ENCODE measurements at regions of chr12 and their contacts with region 1.

Region 1: DNA sequence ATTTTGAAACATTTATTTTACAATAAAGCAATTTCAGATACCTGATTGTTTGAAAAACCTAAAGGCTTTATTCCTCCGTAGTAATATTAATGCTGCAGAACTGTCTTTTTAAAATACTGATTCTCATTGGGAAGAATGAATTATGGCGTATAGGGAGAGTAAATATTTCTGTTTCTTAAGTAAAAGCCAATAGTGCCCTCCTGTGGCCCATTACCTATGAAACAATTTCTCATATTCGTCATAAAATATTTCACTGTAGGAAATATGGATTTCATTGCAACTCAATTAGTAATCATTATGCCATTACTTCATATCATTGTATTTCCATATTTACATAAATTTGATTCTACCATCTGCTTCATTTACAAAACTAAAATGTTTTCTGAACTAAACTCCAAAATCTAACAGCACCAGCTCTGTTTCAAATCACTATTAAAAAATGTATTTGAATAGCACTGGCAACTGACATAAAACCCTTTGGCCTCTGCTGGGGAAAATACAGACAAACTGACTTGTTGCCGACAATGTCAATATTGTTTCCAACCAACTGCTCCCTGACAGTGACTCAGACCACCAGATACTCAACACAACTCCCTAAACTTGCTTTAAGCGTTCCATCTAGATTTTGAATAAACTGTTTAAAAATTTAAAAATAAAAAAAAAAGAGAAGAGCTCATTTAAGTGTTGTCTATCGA is 290.3 kb downstream of the NAV3 start:
- DNase-seq: no peak
- H3K4me3 ChIP-seq: no peak overlapping the region
- H3K27ac ChIP-seq: no peak overlapping the region
- H3K4me1 ChIP-seq: no peaks in the 10 kb centered on the region
- H3K27me3 ChIP-seq: no peaks in the 10 kb centered on the region
- CTCF ChIP-seq: peak in 1 of 3 experiments; percentile 3; a peak in 2 of 4 replicates
- EP300 ChIP-seq: no peak
- POLR2A ChIP-seq: no peak
- RAD21 ChIP-seq: peak in 1 of 2 experiments; percentile 40; a peak in 3 of 4 replicates

Region 2: DNA sequence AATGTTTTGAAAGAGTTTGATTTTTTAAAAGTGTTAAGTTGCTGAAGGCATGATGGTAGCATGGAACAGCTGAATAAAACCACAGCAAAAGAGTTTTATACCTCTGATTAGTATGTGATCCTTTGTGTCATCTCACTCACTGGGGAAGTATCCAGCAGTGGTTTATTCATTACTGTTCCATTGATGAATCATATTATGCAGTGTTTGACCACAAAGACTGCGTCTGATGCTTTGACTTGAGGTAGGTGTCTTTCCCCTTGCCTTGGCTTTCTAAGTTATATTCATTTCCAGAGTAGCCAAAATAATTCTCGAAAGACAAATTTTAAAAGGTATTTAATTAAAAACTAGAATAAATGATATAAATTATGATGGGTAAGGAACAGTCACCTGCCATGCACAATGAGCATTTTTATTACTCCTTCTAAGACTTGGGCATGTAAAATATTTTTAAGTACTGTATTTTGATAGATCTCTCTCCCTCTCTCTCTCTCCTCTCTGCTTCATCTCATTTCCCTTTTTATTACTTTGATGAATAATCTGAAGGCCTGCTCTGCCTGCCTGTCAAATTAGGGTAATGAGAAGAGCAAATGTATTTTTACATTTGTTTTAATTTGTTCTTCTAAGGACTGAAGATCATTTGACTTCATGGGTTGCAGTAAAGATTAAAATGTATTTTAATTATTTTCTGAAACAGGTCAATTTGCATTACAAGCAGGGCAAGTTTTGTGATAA is 125.4 kb before region 1 on chr12:
- CTCF ChIA-PET with region 1: interaction called, 17 read pairs
- POLR2A ChIA-PET with region 1: no interaction called
- DNase-seq: no peak
- H3K4me3 ChIP-seq: no peak overlapping the region
- H3K27ac ChIP-seq: no peak overlapping the region
- H3K4me1 ChIP-seq: no peaks in the 10 kb centered on the region
- H3K27me3 ChIP-seq: no peaks in the 10 kb centered on the region
- CTCF ChIP-seq: no peak
- EP300 ChIP-seq: no peak
- POLR2A ChIP-seq: no peak
- RAD21 ChIP-seq: no peak

Region 3: GRCh38 chr12:78004249-78005093 is 116.5 kb before region 1 on chr12:
- CTCF ChIA-PET with region 1: interaction called, 11 read pairs
- POLR2A ChIA-PET with region 1: no interaction called
- DNase-seq: no peak
- H3K4me3 ChIP-seq: no peak overlapping the region
- H3K27ac ChIP-seq: no peak overlapping the region
- H3K4me1 ChIP-seq: no peaks in the 10 kb centered on the region
- H3K27me3 ChIP-seq: no peaks in the 10 kb centered on the region
- CTCF ChIP-seq: no peak
- EP300 ChIP-seq: no peak
- POLR2A ChIP-seq: no peak
- RAD21 ChIP-seq: no peak

Region 4: DNA sequence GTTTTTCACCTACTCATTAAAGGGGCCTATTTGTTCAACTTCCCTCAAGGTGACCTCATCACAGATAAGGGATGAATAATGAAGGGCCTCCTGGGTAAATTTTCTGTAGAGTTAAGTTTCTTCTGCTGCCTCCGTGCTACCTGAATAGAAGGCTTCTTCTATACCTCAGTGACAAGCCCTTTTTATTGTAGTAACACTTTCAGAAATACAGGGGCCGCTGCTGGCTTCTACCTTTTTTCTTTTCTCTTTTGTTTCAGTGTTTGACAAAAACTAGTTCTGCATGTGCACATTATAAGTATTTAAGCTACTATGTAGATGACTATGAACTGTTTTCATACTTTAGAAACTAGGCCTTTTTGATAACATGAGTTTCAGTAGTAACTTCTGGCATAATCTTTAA is 83.3 kb before region 1 on chr12:
- CTCF ChIA-PET with region 1: interaction called, 12 read pairs
- POLR2A ChIA-PET with region 1: no interaction called
- DNase-seq: no peak
- H3K4me3 ChIP-seq: no peak overlapping the region
- H3K27ac ChIP-seq: no peak overlapping the region
- H3K4me1 ChIP-seq: no peaks in the 10 kb centered on the region
- H3K27me3 ChIP-seq: no peaks in the 10 kb centered on the region
- CTCF ChIP-seq: peak in 1 of 3 experiments; percentile 26; a peak in 2 of 4 replicates
- EP300 ChIP-seq: no peak
- POLR2A ChIP-seq: no peak
- RAD21 ChIP-seq: no peak; a peak in 1 of 4 replicates

Measured in H1 (cell line).